Activated naive CD4-positive, alpha-beta T cell treated with anti-CD3 and anti-CD28 coated beads, Interleukin-2, amount 10 ng/mL, durations not matched to agents 7 days and 5 days (primary cell): ENCODE measurements at regions of chr17 and their contacts with region 1.

Region 1: DNA sequence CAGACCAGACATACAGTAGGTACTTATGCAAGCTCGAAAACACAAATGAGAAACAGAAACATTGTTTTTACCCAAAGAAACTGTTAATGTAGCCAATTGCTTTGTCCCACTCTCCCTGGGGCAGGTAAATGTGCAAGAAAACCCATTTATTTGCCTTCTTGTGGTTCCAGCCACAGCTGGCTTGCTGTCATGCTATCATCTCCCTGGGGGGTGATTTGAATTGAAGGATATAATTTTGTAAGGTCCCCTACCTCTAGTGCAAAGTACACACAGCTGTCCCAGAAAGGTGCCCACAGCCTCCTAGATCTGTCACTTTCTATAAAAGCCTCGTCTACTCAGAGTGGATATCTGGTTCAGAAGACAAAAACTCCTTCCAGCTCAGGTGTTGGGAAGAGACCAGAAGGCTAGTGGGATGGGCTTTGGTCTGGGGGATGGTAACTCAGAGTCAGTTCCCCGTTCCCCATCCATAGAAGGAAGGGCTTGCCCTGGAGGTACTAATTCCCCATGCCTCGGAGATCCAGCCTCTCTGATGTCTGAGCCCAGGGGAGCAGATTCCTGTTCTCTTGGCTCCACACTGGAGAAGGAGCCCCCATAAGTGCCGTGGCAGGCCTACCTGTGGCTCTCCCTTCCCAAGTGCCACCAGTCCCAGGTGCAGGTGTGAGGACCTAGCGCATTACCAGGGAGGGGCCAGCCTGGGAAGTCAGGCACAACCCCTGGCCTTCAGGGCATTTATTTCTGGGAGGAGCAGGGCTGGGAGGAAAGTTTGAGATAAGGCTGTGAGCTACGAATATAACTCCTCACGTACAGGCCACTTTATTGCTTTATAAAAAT is 2.4 kb upstream of the PRR15L start:
- DNase-seq: no peak
- H3K4me3 Mint-ChIP-seq: no peak overlapping the region
- H3K27ac Mint-ChIP-seq: no peak overlapping the region
- H3K4me1 Mint-ChIP-seq: no peaks in the 10 kb centered on the region
- H3K27me3 Mint-ChIP-seq: peaks cover 13% of the 10 kb centered on the region

Region 2: DNA sequence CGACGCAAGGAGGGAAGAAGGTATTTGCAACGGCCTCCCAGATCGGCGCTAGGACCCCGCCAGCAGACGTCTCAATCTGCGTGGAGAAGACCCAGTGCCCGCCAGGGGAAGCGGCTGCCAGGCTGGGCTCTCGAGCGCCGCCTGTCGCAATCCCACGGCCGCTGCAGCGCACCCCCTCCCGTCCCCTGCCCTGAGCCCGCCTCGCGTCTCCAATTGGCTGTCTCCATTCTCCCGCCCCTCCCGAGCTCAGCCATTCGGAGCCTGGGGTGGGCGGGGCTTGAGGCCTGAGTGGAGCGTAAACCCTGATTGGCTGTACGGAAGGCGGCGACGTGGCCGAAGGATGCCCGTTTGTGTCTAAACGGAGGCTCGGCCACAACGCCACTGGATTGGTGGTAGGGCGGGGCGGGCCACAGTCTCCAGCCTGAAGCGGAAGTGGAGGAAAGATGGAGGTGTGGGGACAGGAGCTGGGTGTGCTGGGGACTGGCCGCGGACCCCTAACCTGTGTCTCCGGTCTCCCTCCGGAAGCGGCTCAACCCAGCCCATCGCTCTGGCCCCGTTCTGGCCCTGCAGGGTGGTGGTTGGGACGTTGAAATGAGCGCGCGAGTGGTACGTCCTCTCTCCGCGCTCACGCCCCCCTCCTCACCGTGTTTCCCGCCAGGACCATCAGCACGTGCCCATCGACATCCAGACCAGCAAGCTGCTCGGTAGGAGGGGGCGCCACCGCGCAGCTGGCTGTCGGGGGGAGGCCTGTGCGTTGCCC is 10.8 kb after region 1 on chr17 and contains the start of gene CDK5RAP3:
- CTCF ChIA-PET with region 1: interaction called, 151 read pairs
- DNase-seq: peak; percentile 100
- H3K4me3 Mint-ChIP-seq: peak within 1 kb of the TSS; percentile 98
- H3K27ac Mint-ChIP-seq: peak within 1 kb of the TSS; percentile 94
- H3K4me1 Mint-ChIP-seq: peaks cover 30% of the 10 kb centered on the region
- H3K27me3 Mint-ChIP-seq: peaks cover 15% of the 10 kb centered on the region